ENCODE measurements at regions of chr4 and their contacts with region 1.

Region 1: DNA sequence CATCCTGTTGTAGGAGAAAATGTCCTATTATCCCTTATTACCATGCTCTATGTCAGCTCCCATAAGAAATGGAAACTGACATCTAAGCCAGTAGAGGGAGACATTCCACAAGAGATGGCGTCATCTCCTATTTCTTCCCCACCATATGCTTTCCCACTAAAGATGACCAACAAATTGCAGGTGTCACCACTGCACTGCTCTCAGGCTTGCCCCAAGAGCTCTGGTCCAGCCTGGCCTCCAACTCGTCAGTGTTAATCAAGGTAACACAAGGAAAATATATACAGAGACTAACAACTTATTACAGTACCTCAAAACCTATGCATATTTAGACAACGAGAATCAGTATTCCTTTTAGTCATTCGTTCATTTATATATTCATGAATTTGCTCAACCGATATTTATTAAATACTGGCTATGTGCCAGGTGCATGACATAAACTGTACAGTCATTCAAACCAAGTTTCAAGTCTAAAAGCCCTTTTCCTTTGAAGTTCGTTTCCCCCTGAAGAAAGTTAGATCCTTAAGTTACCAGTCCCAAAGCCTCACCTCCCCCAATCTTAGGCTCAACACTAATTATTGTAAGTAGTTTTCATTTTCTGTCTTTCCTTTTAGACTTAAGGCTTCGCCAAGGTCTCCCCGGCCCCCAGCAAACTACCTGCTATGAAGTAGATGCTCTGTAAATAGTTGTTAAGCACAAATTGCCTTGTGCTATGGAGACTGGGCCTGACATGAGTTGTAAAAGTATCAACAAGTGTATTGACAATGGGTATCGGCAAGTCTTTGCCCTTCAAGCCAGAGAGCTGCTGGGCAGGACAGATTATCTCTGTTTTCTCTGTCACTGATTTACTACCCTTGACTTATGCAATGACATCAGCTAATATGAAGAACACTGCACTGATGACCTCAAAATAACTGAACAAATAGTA is 3.1 kb upstream of the FGB start:
- DNase-seq: peak; percentile 77
- H3K4me3 Mint-ChIP-seq: no peak overlapping the region
- H3K27ac Mint-ChIP-seq: no peak overlapping the region
- H3K4me1 Mint-ChIP-seq: peaks cover 18% of the 10 kb centered on the region
- H3K27me3 Mint-ChIP-seq: no peaks in the 10 kb centered on the region
- CTCF ChIP-seq: peak; percentile 78

Region 2: GRCh38 chr4:154067786-154068185 is 492.0 kb before region 1 on chr4:
- CTCF ChIA-PET with region 1: no interaction called
- POLR2A ChIA-PET with region 1: no interaction called
- intact Hi-C with region 1: no loop called
- DNase-seq: peak; percentile 36
- H3K4me3 Mint-ChIP-seq: no peak overlapping the region
- H3K27ac Mint-ChIP-seq: peak overlapping the region; percentile 36
- H3K4me1 Mint-ChIP-seq: peaks cover 4% of the 10 kb centered on the region
- H3K27me3 Mint-ChIP-seq: no peaks in the 10 kb centered on the region
- CTCF ChIP-seq: no peak

Region 3: DNA sequence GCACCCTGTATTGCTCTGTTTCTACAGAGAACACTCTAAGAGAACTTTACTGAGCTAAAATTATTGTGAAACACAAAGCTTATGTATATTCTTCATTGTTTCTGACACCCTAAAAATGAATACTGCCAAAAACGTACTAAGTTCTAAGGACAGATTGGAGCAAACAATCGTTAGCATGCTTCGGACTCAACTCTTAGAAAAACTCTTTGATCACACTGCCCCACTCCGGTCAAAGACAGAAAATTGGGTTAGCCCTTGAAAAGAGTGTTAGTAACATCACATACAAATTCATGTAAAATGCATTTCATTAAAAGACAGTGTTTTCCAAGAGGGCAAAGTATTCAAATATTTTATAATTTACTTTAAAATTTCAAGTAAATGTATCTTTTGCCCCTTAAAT is 245.5 kb before region 1 on chr4:
- CTCF ChIA-PET with region 1: no interaction called
- POLR2A ChIA-PET with region 1: no interaction called
- intact Hi-C with region 1: no loop called
- DNase-seq: peak; percentile 53
- H3K4me3 Mint-ChIP-seq: no peak overlapping the region
- H3K27ac Mint-ChIP-seq: no peak overlapping the region
- H3K4me1 Mint-ChIP-seq: no peaks in the 10 kb centered on the region
- H3K27me3 Mint-ChIP-seq: no peaks in the 10 kb centered on the region
- CTCF ChIP-seq: peak; percentile 39

Region 4: DNA sequence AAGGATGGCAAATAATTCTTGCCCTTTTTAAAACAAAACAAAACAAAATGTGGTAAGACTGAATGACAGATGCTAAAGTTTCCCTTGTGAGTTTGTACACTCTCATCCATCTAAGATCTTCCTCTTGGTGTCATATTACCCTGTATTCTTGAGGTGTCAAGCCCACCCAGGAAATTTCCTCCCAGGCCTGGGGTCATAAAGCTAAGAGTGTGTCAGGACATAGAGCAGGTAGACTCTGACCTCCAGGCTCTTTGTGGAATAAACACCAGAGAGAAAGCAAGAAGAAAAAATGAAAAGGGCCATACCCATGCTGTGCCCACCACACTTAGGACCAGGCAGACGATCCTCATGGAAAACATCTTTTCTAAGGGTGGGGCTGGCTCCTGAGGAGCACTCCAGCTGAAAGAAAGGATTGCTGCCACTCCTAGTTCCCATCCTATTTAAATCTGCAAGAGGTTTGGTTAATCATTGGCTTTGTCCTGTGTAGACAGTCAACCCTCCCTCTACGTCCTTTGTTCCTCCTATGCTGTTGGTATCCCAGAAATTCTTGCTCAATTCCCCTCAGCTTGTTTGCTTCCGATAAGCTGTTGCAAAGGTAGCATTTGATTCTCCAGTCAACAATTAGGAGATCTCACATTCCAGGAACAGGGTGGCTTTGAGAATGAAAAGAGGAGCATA is 30.7 kb after region 1 on chr4 and contains the start of gene FGA:
- CTCF ChIA-PET with region 1: interaction called, 13 read pairs
- POLR2A ChIA-PET with region 1: no interaction called
- intact Hi-C with region 1: no loop called
- DNase-seq: no peak
- H3K4me3 Mint-ChIP-seq: no peak within 1 kb of the TSS
- H3K27ac Mint-ChIP-seq: no peak within 1 kb of the TSS
- H3K4me1 Mint-ChIP-seq: peaks cover 5% of the 10 kb centered on the region
- H3K27me3 Mint-ChIP-seq: no peaks in the 10 kb centered on the region
- CTCF ChIP-seq: no peak
- total RNA-seq, gene FGA: not detected in 2 replicates

Region 5: GRCh38 chr4:154602404-154603020 is 42.8 kb after region 1 on chr4:
- CTCF ChIA-PET with region 1: interaction called, 24 read pairs
- POLR2A ChIA-PET with region 1: no interaction called
- intact Hi-C with region 1: no loop called
- DNase-seq: peak; percentile 60
- H3K4me3 Mint-ChIP-seq: no peak overlapping the region
- H3K27ac Mint-ChIP-seq: no peak overlapping the region
- H3K4me1 Mint-ChIP-seq: peaks cover 7% of the 10 kb centered on the region
- H3K27me3 Mint-ChIP-seq: no peaks in the 10 kb centered on the region
- CTCF ChIP-seq: no peak

Region 6: GRCh38 chr4:154686838-154687237 is 127.1 kb after region 1 on chr4:
- CTCF ChIA-PET with region 1: interaction called, 11 read pairs
- POLR2A ChIA-PET with region 1: no interaction called
- intact Hi-C with region 1: no loop called
- DNase-seq: peak; percentile 6
- H3K4me3 Mint-ChIP-seq: no peak overlapping the region
- H3K27ac Mint-ChIP-seq: no peak overlapping the region
- H3K4me1 Mint-ChIP-seq: peaks cover 5% of the 10 kb centered on the region
- H3K27me3 Mint-ChIP-seq: no peaks in the 10 kb centered on the region
- CTCF ChIP-seq: peak; percentile 38